Mammary epithelial cell (primary cell): ENCODE measurements at regions of chr3 and their contacts with region 1.

Region 1: GRCh38 chr3:51311055-51311454 is 74.0 kb upstream of the MANF start:
- DNase-seq: peak; percentile 18
- H3K4me3 ChIP-seq: no peak overlapping the region
- H3K27ac ChIP-seq: no peak overlapping the region
- H3K4me1 ChIP-seq: no peaks in the 10 kb centered on the region
- H3K27me3 ChIP-seq: no peaks in the 10 kb centered on the region
- CTCF ChIP-seq: peak; percentile 35 to 50

Region 2: GRCh38 chr3:51099794-51100535 is 211.1 kb before region 1 on chr3:
- CTCF ChIA-PET with region 1: interaction called, 3 read pairs
- dilution Hi-C with region 1: no loop called
- in situ Hi-C with region 1: no loop called
- intact Hi-C with region 1: loop called (anchors 5 kb)
- DNase-seq: peak; percentile 46
- H3K4me3 ChIP-seq: no peak overlapping the region
- H3K27ac ChIP-seq: no peak overlapping the region
- H3K4me1 ChIP-seq: no peaks in the 10 kb centered on the region
- H3K27me3 ChIP-seq: no peaks in the 10 kb centered on the region
- CTCF ChIP-seq: peak; percentile 75 to 84

Region 3: GRCh38 chr3:51269466-51269865 is 41.6 kb before region 1 on chr3:
- CTCF ChIA-PET with region 1: no interaction called
- dilution Hi-C with region 1: loop called (anchors 5 kb)
- in situ Hi-C with region 1: no loop called
- intact Hi-C with region 1: loop called (anchors 1 kb)
- DNase-seq: peak; percentile 31
- H3K4me3 ChIP-seq: no peak overlapping the region
- H3K27ac ChIP-seq: no peak overlapping the region
- H3K4me1 ChIP-seq: no peaks in the 10 kb centered on the region
- H3K27me3 ChIP-seq: no peaks in the 10 kb centered on the region
- CTCF ChIP-seq: peak; percentile 33 to 66